ENCODE measurements at regions of chr1 and their contacts with region 1.

Region 1: GRCh38 chr1:110460253-110461220 is 9.6 kb downstream of the PROK1 start:
- DNase-seq: peak; percentile 88
- ATAC-seq: peak; percentile 95
- H3K4me3 Mint-ChIP-seq: no peak overlapping the region
- H3K27ac Mint-ChIP-seq: no peak overlapping the region
- H3K4me1 Mint-ChIP-seq: no peaks in the 10 kb centered on the region
- H3K27me3 Mint-ChIP-seq: no peaks in the 10 kb centered on the region

Region 2: GRCh38 chr1:109133815-109134214 is 1326.7 kb before region 1 on chr1:
- CTCF ChIA-PET with region 1: no interaction called
- POLR2A ChIA-PET with region 1: no interaction called
- intact Hi-C with region 1: no loop called
- DNase-seq: peak; percentile 38
- ATAC-seq: no peak
- H3K4me3 Mint-ChIP-seq: no peak overlapping the region
- H3K27ac Mint-ChIP-seq: peak overlapping the region; percentile 22
- H3K4me1 Mint-ChIP-seq: peaks cover 27% of the 10 kb centered on the region
- H3K27me3 Mint-ChIP-seq: no peaks in the 10 kb centered on the region

Region 3: GRCh38 chr1:109556563-109556962 is 904.0 kb before region 1 on chr1:
- CTCF ChIA-PET with region 1: no interaction called
- POLR2A ChIA-PET with region 1: no interaction called
- intact Hi-C with region 1: no loop called
- DNase-seq: no peak
- ATAC-seq: no peak
- H3K4me3 Mint-ChIP-seq: no peak overlapping the region
- H3K27ac Mint-ChIP-seq: peak overlapping the region; percentile 68
- H3K4me1 Mint-ChIP-seq: peaks cover 75% of the 10 kb centered on the region
- H3K27me3 Mint-ChIP-seq: no peaks in the 10 kb centered on the region

Region 4: DNA sequence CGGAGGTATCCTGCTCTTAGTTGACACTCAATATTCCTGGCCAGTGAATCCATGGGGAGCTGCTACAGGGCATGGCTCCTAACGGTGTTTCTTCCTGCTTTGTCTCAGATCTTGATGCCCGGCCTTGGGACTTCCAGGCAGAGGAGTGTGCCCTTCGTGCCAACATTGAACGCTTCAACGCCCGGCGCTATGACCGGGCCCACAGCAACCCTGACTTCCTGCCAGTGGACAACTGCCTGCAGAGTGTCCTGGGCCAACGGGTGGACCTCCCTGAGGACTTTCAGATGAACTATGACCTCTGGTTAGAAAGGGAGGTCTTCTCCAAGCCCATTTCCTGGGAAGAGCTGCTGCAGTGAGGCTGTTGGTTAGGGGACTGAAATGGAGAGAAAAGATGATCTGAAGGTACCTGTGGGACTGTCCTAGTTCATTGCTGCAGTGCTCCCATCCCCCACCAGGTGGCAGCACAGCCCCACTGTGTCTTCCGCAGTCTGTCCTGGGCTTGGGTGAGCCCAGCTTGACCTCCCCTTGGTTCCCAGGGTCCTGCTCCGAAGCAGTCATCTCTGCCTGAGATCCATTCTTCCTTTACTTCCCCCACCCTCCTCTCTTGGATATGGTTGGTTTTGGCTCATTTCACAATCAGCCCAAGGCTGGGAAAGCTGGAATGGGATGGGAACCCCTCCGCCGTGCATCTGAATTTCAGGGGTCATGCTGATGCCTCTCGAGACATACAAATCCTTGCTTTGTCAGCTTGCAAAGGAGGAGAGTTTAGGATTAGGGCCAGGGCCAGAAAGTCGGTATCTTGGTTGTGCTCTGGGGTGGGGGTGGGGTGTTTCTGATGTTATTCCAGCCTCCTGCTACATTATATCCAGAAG is 406.7 kb before region 1 on chr1:
- CTCF ChIA-PET with region 1: interaction called, 3 read pairs
- POLR2A ChIA-PET with region 1: no interaction called
- intact Hi-C with region 1: loop called in 1 of 2 experiments (anchors 5 kb)
- DNase-seq: peak; percentile 83
- ATAC-seq: peak; percentile 88
- H3K4me3 Mint-ChIP-seq: no peak overlapping the region
- H3K27ac Mint-ChIP-seq: no peak overlapping the region
- H3K4me1 Mint-ChIP-seq: no peaks in the 10 kb centered on the region
- H3K27me3 Mint-ChIP-seq: no peaks in the 10 kb centered on the region

Region 5: GRCh38 chr1:110203021-110203661 is 257.4 kb before region 1 on chr1:
- CTCF ChIA-PET with region 1: interaction called, 87 read pairs
- POLR2A ChIA-PET with region 1: no interaction called
- intact Hi-C with region 1: loop called (anchors 1 kb)
- DNase-seq: peak; percentile 82
- ATAC-seq: peak; percentile 63
- H3K4me3 Mint-ChIP-seq: no peak overlapping the region
- H3K27ac Mint-ChIP-seq: peak overlapping the region; percentile 79
- H3K4me1 Mint-ChIP-seq: peaks cover 15% of the 10 kb centered on the region
- H3K27me3 Mint-ChIP-seq: no peaks in the 10 kb centered on the region

Region 6: DNA sequence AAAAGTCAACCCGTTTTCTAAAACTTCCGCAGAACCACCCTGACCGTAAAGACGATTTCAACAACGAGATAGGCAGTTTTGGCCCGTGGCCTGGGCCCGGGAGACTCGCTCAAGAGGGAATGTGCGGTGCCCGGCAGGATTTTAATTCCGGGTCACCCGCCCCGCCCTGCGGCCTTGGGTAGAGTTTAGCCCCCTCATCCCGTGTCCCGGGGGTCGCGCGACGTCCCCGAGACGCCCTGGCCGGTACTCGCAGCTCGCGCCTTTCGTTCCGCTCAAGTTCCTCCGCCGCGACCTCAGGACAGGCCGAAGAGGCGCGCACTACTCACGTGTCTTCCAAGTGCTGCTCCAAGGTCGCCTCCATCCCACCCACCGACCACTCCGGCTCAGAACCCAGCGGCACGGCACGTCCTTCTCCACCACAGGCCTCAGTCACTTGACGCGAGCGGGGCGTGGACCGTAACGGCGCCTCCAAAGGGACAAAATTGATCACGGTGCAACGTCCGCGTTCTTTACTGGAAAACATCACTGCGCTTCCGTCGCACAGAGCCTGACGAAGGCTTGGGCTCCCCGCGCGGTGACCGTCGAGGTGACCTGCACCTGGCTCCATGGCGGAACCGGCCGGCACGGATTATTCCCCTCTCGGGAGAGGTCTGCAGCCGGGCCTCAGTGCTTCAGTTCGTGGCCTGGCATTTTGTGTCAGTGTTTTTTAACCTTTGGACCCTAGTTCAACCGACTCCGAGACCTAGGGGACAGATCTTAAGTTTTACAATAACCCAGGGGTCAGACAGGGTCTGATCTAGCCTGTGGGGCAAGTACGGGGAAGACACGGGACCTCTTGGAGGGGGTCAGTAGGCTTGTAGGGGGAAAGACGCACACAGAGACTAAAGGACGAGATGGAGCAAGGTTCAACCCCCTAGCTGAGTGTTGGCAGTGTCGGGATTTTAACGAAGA is 53.0 kb before region 1 on chr1 and contains the start of gene LAMTOR5:
- CTCF ChIA-PET with region 1: interaction called, 81 read pairs
- POLR2A ChIA-PET with region 1: no interaction called
- intact Hi-C with region 1: loop called (anchors 1 kb)
- DNase-seq: peak; percentile 95
- ATAC-seq: peak; percentile 93
- H3K4me3 Mint-ChIP-seq: peak within 1 kb of the TSS; percentile 98
- H3K27ac Mint-ChIP-seq: peak within 1 kb of the TSS; percentile 100
- H3K4me1 Mint-ChIP-seq: peaks cover 17% of the 10 kb centered on the region
- H3K27me3 Mint-ChIP-seq: no peaks in the 10 kb centered on the region
- total RNA-seq, gene LAMTOR5: 141 to 155 TPM

Region 7: DNA sequence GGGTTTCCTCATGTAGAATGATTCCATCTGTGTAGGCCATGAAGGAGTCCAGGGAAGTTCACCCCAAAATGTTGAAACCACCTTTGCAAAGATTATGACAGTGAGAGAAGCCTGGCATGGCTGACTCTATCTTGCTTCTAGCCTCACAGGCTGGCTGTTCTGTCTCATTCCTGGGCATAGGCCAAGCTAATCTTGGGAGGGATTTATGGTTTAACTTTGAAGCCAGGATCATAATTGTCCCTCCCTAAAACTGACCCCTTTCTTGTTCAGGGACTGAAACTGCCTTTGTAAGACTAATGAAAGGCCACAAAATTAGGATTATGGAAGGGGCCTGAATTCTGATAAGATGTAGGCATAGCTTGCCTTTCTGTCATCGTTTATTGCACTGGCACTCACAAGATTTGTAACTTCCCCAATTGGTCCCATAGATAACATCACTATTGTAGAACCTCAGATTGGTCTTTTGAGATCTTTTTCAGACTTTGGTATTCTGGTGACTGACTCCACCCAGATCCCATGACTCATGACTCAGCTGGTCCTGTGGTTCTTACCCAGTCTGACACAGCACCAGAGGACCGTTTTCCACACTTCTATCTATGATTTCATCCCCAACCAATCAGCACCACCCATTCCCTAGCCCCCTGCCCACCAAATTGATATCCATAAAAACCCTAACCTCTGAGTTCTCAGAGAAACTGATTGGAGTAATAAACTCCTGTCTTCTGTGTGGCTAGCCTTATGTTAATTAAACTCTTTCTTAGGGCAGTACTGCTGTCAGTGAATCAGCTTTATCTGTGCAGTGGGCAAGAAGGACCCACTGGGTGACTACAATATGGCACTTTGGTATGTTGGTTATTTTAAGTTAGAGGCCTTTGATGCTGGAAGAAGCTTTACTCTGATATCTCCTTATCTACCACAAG is 39.4 kb before region 1 on chr1:
- CTCF ChIA-PET with region 1: interaction called, 81 read pairs
- POLR2A ChIA-PET with region 1: no interaction called
- intact Hi-C with region 1: no loop called
- DNase-seq: peak; percentile 32
- ATAC-seq: no peak
- H3K4me3 Mint-ChIP-seq: no peak overlapping the region
- H3K27ac Mint-ChIP-seq: no peak overlapping the region
- H3K4me1 Mint-ChIP-seq: no peaks in the 10 kb centered on the region
- H3K27me3 Mint-ChIP-seq: peaks cover 4% of the 10 kb centered on the region

Region 8: DNA sequence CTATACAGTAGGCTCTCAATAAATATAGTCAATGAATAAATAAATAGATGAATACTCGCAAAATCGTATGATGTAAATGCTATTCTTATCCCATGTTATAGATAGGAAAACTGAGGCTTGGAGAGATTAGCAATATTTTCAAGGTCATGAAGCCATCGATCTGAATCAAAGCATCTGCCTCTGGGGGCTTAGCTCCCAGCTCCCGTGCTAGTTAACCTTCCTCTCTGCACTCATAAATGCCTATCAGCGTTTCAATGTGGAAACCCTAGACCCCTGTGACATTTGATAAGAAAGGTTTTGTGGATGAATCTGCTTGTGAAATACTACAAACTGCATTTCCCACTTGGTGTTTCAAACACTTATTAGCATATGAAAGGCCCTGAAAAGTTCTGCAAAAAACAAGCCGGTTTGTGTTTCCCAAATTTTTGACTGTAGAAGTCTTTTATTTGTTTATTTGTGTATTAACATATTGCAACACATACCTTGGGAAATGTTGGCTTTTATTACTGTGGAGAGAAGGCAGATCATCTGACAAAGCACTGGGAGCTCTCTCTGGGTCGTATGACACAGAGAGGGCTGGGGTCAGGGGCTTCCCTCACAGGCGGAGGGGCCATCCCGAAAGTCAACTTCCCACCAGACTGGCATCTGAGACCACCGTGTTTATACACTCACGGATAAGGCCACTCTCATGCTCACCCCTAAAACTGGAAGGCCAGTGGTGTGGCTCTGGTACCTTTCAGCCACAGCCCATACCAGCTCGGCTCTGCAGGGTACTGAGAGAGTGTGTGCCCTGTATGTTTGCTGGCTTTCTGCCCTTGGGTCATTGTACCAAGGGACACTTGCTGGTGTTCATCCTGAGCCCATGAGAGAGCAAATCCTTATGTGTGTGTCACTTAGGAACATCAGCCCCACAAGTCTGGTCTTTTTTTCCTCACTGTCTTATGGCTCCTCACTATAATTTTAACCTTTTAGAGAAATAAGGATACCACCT is 10.6 kb before region 1 on chr1:
- CTCF ChIA-PET with region 1: interaction called, 17 read pairs
- POLR2A ChIA-PET with region 1: no interaction called
- intact Hi-C with region 1: no loop called
- DNase-seq: no peak
- ATAC-seq: no peak
- H3K4me3 Mint-ChIP-seq: no peak overlapping the region
- H3K27ac Mint-ChIP-seq: no peak overlapping the region
- H3K4me1 Mint-ChIP-seq: no peaks in the 10 kb centered on the region
- H3K27me3 Mint-ChIP-seq: no peaks in the 10 kb centered on the region

Measured in activated CD4-positive, alpha-beta T cell treated with anti-CD3 and anti-CD28 coated beads for 36 hours (primary cell).